BJ (cell line): ENCODE measurements at regions of chr5 and their contacts with region 1.

Region 1: GRCh38 chr5:171342362-171343111 is 33.5 kb downstream of the TLX3 start:
- DNase-seq: no peak
- H3K4me3 ChIP-seq: no peak overlapping the region
- H3K27me3 ChIP-seq: no peaks in the 10 kb centered on the region
- CTCF ChIP-seq: peak; percentile 75

Region 2: DNA sequence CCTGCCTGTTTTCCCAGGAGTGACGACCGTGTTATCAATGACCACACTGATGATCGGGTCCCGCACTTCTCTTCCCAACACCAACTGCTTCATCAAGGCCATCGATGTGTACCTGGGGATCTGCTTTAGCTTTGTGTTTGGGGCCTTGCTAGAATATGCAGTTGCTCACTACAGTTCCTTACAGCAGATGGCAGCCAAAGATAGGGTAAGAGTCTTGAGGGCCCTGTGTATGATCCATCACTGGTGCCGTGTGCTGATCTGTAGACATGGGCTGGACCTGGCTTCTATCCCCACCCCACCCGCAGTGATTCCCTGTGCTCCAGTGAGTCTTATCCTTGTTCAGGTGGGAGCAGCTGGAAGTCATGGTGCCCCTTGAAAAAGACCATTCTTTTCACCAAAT is 533.0 kb before region 1 on chr5:
- CTCF ChIA-PET with region 1: interaction called, 39 read pairs
- POLR2A ChIA-PET with region 1: no interaction called
- DNase-seq: no peak
- H3K4me3 ChIP-seq: no peak overlapping the region
- H3K27me3 ChIP-seq: no peaks in the 10 kb centered on the region
- CTCF ChIP-seq: peak; percentile 59

Region 3: GRCh38 chr5:171201310-171201709 is 141.2 kb before region 1 on chr5:
- CTCF ChIA-PET with region 1: interaction called, 247 read pairs
- POLR2A ChIA-PET with region 1: no interaction called
- DNase-seq: no peak
- H3K4me3 ChIP-seq: no peak overlapping the region
- H3K27me3 ChIP-seq: no peaks in the 10 kb centered on the region
- CTCF ChIP-seq: no peak

Region 4: GRCh38 chr5:171207256-171207847 is 135.2 kb before region 1 on chr5:
- CTCF ChIA-PET with region 1: interaction called, 247 read pairs
- POLR2A ChIA-PET with region 1: interaction called, 5 read pairs
- DNase-seq: peak; percentile 13
- H3K4me3 ChIP-seq: no peak overlapping the region
- H3K27me3 ChIP-seq: no peaks in the 10 kb centered on the region
- CTCF ChIP-seq: peak; percentile 59

Region 5: GRCh38 chr5:171323806-171324633 is 18.5 kb before region 1 on chr5:
- CTCF ChIA-PET with region 1: interaction called, 12 read pairs
- POLR2A ChIA-PET with region 1: no interaction called
- DNase-seq: no peak
- H3K4me3 ChIP-seq: no peak overlapping the region
- H3K27me3 ChIP-seq: peaks cover 36% of the 10 kb centered on the region
- CTCF ChIP-seq: no peak

Region 6: DNA sequence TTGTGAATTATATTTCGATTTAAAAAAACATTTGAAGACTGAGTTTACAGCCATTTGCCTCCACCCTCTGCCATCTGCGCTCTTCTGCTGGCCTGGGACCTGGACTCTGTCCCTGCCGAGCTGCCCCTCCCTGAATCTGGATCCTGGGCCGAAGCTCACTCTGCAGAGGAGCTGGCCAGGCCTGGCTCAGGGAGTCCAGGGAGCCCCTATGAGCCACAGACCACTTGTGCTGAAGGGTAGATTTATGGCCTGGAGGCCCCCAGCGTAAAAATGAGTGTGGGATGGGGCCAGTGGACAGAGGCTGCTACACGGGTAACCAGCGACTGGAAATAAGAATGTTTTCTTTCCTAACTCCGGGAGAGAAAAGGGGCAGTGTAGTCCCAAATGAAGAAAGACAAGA is 206.7 kb after region 1 on chr5:
- CTCF ChIA-PET with region 1: no interaction called
- POLR2A ChIA-PET with region 1: no interaction called
- DNase-seq: no peak
- H3K4me3 ChIP-seq: no peak overlapping the region
- H3K27me3 ChIP-seq: no peaks in the 10 kb centered on the region
- CTCF ChIP-seq: no peak